ENCODE measurements at regions of chr18 and their contacts with region 1.

Region 1: DNA sequence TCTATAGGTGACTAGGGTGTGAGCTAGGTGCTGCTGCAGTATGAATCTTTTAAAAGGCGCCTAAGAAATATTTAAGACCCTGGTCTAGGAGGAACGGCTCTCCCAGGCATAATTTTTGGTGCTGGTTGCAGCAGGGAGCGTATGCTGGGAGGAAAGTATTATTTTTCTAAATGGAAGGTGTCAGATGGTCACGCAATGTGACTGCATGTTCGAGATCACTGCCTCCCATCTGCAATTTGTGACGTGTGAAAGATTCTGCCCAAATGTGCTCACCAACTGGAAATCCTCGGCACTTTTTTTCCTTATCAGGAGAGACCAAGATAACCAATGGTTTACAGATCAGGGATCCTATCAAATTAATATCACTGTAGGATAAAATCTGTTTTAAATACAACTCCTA is 95.6 kb upstream of the KLHL14 start:
- DNase-seq: no peak
- ATAC-seq: peak; percentile 62
- H3K4me3 Mint-ChIP-seq: peak overlapping the region; percentile 72
- H3K27ac Mint-ChIP-seq: peak overlapping the region; percentile 95
- H3K4me1 Mint-ChIP-seq: peaks cover 90% of the 10 kb centered on the region
- H3K27me3 Mint-ChIP-seq: no peaks in the 10 kb centered on the region
- CTCF ChIP-seq: no peak

Region 2: GRCh38 chr18:32879497-32879896 is 11.1 kb after region 1 on chr18:
- CTCF ChIA-PET with region 1: interaction called, 13 read pairs
- POLR2A ChIA-PET with region 1: interaction called, 44 read pairs
- intact Hi-C with region 1: loop called (anchors 1 kb)
- DNase-seq: no peak
- ATAC-seq: no peak
- H3K4me3 Mint-ChIP-seq: no peak overlapping the region
- H3K27ac Mint-ChIP-seq: peak overlapping the region; percentile 89
- H3K4me1 Mint-ChIP-seq: peaks cover 84% of the 10 kb centered on the region
- H3K27me3 Mint-ChIP-seq: no peaks in the 10 kb centered on the region
- CTCF ChIP-seq: no peak

Region 3: DNA sequence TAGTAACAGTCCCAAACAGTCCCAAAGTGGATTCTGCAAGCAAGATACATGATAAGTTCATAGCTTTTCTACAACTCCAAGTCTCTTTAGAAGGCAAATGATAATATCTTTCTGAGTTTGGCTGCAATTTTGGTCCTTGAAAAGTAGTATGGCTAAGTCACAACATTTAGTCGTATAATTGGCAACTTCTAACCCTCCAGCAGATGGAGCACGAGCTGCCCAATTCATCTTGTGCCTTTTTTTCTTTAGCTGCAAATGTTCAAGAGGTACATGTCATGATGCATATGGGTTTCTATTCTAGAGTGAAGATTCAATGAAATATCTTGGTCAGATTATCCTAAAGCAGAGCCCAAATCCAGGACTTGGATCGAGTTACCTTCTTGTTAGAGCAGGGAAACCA is 31.4 kb after region 1 on chr18:
- CTCF ChIA-PET with region 1: no interaction called
- POLR2A ChIA-PET with region 1: no interaction called
- intact Hi-C with region 1: loop called (anchors 5 kb)
- DNase-seq: no peak
- ATAC-seq: no peak
- H3K4me3 Mint-ChIP-seq: no peak overlapping the region
- H3K27ac Mint-ChIP-seq: no peak overlapping the region
- H3K4me1 Mint-ChIP-seq: peaks cover 25% of the 10 kb centered on the region
- H3K27me3 Mint-ChIP-seq: no peaks in the 10 kb centered on the region
- CTCF ChIP-seq: no peak

Region 4: GRCh38 chr18:33291539-33291938 is 423.1 kb after region 1 on chr18:
- CTCF ChIA-PET with region 1: no interaction called
- POLR2A ChIA-PET with region 1: no interaction called
- intact Hi-C with region 1: no loop called
- DNase-seq: no peak
- ATAC-seq: no peak
- H3K4me3 Mint-ChIP-seq: no peak overlapping the region
- H3K27ac Mint-ChIP-seq: no peak overlapping the region
- H3K4me1 Mint-ChIP-seq: no peaks in the 10 kb centered on the region
- H3K27me3 Mint-ChIP-seq: no peaks in the 10 kb centered on the region
- CTCF ChIP-seq: no peak